ENCODE measurements at regions of chr2 and their contacts with region 1.

Region 1: DNA sequence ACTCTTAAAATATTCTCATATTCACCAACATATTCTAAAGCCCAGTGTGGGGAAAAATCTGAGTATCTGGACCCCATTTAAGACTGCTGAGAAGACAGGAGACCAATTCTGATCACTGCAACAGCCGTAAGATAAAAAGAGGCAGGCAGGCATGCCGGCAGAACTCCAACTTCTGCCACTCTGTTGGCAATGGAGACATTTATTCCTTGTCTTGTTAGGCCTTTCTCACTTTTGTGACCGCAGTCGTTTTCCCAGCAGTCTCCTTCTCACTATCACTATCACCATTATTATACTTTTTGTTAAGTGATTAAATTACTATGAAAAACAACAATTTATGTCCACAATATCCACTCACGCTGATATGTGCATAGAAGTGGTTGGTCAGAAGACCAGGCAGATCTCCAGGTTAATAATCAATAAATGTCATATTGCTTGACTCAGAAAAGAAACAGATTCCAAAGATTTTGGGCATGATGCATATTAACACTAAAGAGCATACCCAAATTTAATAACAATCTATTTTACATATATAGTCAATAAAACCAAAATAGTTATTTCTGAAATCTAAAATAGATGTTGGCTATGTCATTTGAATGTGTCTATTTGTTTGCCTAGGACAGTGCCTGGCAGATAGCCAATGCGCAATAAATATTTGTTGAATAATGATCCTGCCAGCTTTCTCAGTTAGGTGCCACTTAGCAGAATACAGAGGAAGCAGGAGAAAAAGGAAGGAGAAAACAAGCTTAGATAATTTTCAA is 38.2 kb downstream of the SESTD1 start:
- DNase-seq: no peak
- ATAC-seq: peak; percentile 65

Region 2: GRCh38 chr2:179201869-179202268 is 24.5 kb before region 1 on chr2:
- intact Hi-C with region 1: no loop called
- DNase-seq: no peak
- ATAC-seq: no peak

Region 3: DNA sequence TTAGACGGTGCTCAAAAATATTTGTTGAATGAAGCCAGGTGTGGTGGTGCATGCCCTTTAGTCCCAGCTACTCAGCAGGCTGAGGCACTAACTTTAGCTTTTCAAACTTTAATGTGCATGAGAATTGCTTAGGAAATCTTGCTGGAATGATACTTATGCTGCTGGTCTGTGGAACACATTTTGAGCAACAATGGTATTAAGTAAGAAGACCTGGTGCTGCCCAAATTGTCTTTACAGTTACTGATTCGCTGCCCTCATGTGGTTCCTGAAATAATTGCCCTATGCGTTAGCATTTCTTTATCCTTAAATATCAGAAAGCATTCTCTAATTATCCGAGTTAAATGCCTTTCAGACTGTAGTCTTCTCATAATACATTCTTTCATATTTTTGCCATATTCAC is 114.3 kb after region 1 on chr2:
- intact Hi-C with region 1: loop called (anchors 10 kb)
- DNase-seq: no peak
- ATAC-seq: peak; percentile 30

Region 4: GRCh38 chr2:180115675-180116074 is 889.3 kb after region 1 on chr2:
- intact Hi-C with region 1: no loop called
- DNase-seq: no peak
- ATAC-seq: no peak

Measured in Right ventricle myocardium superior (tissue), 1 donor.